Calu3 (cell line): ENCODE measurements at regions of chr21 and their contacts with region 1.

Region 1: DNA sequence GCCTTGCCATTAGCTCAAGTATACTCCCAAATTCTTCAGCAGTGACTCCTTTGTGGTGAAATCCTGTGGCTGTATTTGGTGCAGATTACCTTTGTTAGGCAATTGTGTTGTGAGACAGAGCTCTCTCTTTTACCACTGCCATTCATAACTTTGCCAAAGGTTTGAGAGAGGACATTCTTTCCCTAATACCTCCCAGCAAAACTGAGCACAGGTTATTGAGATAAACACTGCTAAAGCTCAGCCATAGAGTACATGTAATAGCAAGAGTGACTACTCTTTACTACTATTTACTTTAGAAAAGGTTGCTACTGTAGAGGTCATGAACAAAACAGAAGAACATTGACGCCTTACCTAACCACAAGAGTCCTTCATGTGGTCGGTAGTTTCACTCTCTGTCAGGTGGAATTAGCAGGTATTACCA is 514.0 kb upstream of the ADAMTS5 start:
- DNase-seq: peak; percentile 37
- H3K4me3 Mint-ChIP-seq: no peak overlapping the region
- H3K27ac Mint-ChIP-seq: peak overlapping the region; percentile 32
- H3K4me1 Mint-ChIP-seq: peaks cover 17% of the 10 kb centered on the region
- H3K27me3 Mint-ChIP-seq: no peaks in the 10 kb centered on the region
- CTCF ChIP-seq: no peak

Region 2: DNA sequence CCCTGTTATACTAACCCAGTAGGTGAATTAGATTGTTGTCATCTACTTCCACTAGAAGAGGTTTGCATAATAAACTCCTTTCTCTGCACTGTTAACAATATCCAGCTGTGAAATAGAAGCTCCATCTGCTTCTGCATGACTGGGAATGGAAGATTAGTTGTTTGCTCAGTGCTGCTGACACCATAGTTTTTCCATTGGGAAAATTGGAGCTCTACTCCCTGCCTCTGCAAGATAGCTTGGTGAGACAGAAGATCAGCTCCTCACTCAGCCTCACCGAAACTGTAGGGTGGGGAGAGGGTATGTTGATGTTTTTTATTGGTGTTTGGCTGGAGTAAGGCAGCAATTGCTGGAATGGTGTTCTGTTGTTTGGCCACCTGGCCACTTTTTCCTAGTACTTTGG is 182.4 kb before region 1 on chr21:
- CTCF ChIA-PET with region 1: no interaction called
- intact Hi-C with region 1: no loop called
- DNase-seq: no peak
- H3K4me3 Mint-ChIP-seq: no peak overlapping the region
- H3K27ac Mint-ChIP-seq: no peak overlapping the region
- H3K4me1 Mint-ChIP-seq: no peaks in the 10 kb centered on the region
- H3K27me3 Mint-ChIP-seq: no peaks in the 10 kb centered on the region
- CTCF ChIP-seq: no peak

Region 3: DNA sequence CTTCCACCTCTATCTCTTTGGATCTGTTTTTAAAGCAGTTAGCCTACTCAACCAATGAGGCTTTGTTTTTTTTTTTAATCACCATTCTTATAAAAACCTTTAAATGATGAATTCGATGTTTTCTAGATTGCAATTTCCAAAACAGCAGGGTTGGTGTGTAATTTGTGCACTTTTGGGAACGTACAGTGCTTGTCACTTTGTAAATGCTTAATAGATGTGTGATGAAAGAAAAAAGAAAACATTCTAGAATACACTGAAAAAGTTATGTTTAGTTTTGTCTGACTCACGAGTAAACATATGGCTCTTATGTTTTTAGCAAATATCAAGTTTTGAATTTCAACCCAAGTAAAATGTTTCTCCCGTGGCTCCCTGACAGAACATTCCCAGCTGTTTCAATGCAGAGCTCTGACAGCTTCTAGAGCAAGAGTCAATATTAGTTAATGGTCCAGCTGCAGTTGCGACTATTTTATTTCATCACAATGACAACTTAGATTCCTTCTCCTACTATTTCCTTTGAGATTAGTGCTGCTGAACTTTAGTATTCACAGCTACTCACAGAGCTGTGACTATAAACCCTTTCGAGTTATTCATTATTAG is 151.5 kb before region 1 on chr21:
- CTCF ChIA-PET with region 1: no interaction called
- intact Hi-C with region 1: loop called (anchors 10 kb)
- DNase-seq: no peak
- H3K4me3 Mint-ChIP-seq: no peak overlapping the region
- H3K27ac Mint-ChIP-seq: no peak overlapping the region
- H3K4me1 Mint-ChIP-seq: no peaks in the 10 kb centered on the region
- H3K27me3 Mint-ChIP-seq: no peaks in the 10 kb centered on the region
- CTCF ChIP-seq: no peak